Natural killer cell (primary cell): ENCODE measurements at regions of chr14 and their contacts with region 1.

Region 1: GRCh38 chr14:63543000-63543825 is at the start of gene PPP2R5E:
- DNase-seq: peak; percentile 97 to 99
- ATAC-seq: peak; percentile 95 to 99 (median 95)
- H3K4me3 ChIP-seq: peak within 1 kb of the TSS; percentile 92
- H3K4me3 Mint-ChIP-seq: peak within 1 kb of the TSS; percentile 99
- H3K27ac ChIP-seq: peak within 1 kb of the TSS; percentile 86
- H3K27ac Mint-ChIP-seq: peak within 1 kb of the TSS; percentile 92
- H3K4me1 ChIP-seq: peaks cover 12% of the 10 kb centered on the region
- H3K4me1 Mint-ChIP-seq: peaks cover 28 to 34% of the 10 kb centered on the region in 2 donors
- H3K27me3 ChIP-seq: no peaks in the 10 kb centered on the region
- H3K27me3 Mint-ChIP-seq: no peaks in the 10 kb centered on the region
- CTCF ChIP-seq: no peak
- total RNA-seq, gene PPP2R5E: 57.4 to 64.1 (median 62.4) TPM

Region 2: DNA sequence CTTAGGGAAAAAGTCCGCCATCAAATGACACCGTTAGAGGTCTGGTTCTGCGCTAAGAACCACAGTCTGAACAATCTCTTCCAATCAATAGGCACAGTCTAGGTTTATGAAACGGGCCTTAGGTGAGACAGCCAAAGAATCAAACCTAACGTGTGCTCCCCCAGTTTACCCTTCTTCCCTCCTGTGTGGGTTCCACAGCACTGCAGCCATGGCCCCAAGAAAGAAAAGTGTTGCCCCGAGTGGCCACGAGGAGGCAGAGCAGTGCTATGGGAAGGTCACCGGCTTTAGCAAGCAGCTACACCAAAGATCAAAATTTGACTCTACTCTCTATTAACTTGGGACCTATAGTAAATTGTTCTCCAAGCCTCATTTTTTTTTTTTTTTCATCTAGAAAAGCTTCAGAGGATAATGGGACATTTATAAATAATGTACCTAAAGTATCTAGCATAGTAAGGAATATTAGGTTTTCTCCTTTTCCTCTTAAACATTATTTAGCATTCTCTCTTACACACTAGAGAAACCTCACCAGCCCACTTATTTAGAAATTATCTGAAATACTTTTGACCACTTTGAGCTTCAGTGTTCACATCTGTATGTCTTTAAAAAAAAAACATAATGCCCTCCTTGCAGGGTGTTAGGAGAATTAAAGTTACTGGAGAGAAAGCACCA is 154.3 kb before region 1 on chr14:
- intact Hi-C with region 1: loop called (anchors 1 kb)
- DNase-seq: peak; percentile 57 to 66
- ATAC-seq: peak; percentile 79 to 88 (median 83)
- H3K4me3 ChIP-seq: no peak overlapping the region
- H3K4me3 Mint-ChIP-seq: no peak overlapping the region
- H3K27ac ChIP-seq: no peak overlapping the region
- H3K27ac Mint-ChIP-seq: peak overlapping the region; percentile 44 to 67
- H3K4me1 ChIP-seq: peaks cover 8% of the 10 kb centered on the region
- H3K4me1 Mint-ChIP-seq: peaks cover 26 to 29% of the 10 kb centered on the region in 2 donors
- H3K27me3 ChIP-seq: no peaks in the 10 kb centered on the region
- H3K27me3 Mint-ChIP-seq: no peaks in the 10 kb centered on the region
- CTCF ChIP-seq: peak; percentile 78

Region 3: DNA sequence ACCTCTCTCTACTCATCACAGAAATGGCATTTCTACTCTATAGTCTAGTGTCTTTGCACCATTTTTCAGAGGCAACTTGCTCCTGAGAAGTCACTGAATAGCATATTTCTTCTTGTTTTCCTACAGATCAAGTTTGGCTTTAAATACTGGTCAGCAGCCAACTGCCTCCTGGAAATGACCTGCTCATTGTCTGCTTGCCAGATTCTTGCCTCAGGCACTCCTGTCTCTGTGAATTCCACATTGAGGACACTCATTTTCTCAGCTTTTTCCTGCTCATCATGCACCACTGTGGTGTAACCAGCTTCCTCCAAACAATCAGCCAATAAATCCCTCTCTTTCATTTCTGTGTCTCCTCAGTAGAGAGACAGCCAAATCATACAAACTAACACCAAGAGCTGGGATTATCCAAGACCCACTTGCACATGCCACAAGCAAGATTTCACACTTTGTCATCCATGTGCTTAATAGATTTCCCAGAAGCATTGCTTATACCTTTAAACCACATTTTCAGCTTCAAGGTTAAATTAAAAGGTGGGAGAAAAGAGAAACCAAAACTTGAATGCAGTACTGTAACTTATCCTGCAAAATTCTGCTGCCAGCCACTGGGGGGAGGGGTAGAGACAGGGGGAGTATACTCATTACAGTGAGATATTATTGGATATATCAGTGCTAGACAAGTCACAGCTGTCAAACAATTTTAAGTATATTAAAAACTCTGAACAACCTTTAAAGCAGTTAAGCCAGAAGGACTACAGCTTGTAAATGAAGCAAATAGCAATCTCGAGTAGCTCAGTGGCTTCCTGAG is 105.1 kb before region 1 on chr14:
- intact Hi-C with region 1: loop called (anchors 2 kb)
- DNase-seq: peak in 1 of 2 donors; percentile 37
- ATAC-seq: peak; percentile 71 to 84 (median 77)
- H3K4me3 ChIP-seq: no peak overlapping the region
- H3K4me3 Mint-ChIP-seq: peak overlapping the region; percentile 67
- H3K27ac ChIP-seq: no peak overlapping the region
- H3K27ac Mint-ChIP-seq: peak overlapping the region; percentile 73 to 79
- H3K4me1 ChIP-seq: peaks cover 11% of the 10 kb centered on the region
- H3K4me1 Mint-ChIP-seq: peaks cover 61 to 62% of the 10 kb centered on the region in 2 donors
- H3K27me3 ChIP-seq: no peaks in the 10 kb centered on the region
- H3K27me3 Mint-ChIP-seq: no peaks in the 10 kb centered on the region
- CTCF ChIP-seq: peak; percentile 26

Region 4: GRCh38 chr14:63478010-63478409 is 65.2 kb before region 1 on chr14:
- intact Hi-C with region 1: loop called (anchors 1 kb)
- DNase-seq: peak in 1 of 2 donors; percentile 64
- ATAC-seq: peak; percentile 86 to 92 (median 92)
- H3K4me3 ChIP-seq: no peak overlapping the region
- H3K4me3 Mint-ChIP-seq: peak overlapping the region; percentile 43
- H3K27ac ChIP-seq: peak overlapping the region; percentile 74
- H3K27ac Mint-ChIP-seq: peak overlapping the region; percentile 82 to 88
- H3K4me1 ChIP-seq: peaks cover 9% of the 10 kb centered on the region
- H3K4me1 Mint-ChIP-seq: peaks cover 21 to 43% of the 10 kb centered on the region in 2 donors
- H3K27me3 ChIP-seq: no peaks in the 10 kb centered on the region
- H3K27me3 Mint-ChIP-seq: no peaks in the 10 kb centered on the region
- CTCF ChIP-seq: no peak

Region 5: DNA sequence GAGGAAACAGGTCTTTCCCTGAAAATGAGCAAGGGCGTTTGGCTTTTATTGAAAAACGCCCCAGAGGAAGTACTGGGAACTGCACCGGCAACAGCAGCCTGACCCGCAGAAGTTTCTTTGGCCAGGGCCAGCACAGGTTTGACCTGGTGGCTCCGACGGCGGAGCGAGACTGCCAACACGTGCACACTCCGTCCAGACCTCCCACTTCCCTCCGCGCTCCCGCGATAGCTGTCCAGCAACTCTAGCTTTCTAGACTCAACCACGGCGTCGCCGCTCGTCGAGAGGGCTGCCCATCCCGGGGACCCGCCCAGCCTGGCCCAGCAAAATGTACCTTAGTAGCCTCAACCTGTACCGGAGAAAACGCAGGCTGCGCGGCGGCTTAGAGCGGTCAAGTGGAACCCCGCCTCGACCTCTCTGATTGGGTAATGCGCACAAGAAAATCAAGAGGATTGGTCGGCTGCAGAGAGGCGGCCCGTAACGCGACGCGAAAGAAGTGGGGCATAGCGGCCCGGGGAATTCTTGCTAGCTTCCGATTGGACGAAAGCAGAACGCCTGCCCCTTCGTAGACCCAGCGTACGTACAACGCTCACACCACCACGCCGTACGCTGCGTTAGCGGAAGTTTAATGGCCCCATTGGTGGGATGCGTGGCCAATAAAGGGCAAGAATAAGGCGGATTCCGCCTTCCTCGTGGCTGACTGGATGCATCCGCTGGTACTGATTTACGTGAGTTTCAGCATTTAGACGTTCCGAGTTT is 98.4 kb after region 1 on chr14 and contains the start of gene WDR89:
- intact Hi-C with region 1: loop called (anchors 2 kb)
- DNase-seq: peak; percentile 92 to 99
- ATAC-seq: peak; percentile 79 to 92 (median 81)
- H3K4me3 ChIP-seq: peak within 1 kb of the TSS; percentile 90
- H3K4me3 Mint-ChIP-seq: peak within 1 kb of the TSS; percentile 92
- H3K27ac ChIP-seq: peak within 1 kb of the TSS; percentile 99
- H3K27ac Mint-ChIP-seq: peak within 1 kb of the TSS; percentile 95 to 96
- H3K4me1 ChIP-seq: peaks cover 11% of the 10 kb centered on the region
- H3K4me1 Mint-ChIP-seq: peaks cover 22 to 28% of the 10 kb centered on the region in 2 donors
- H3K27me3 ChIP-seq: no peaks in the 10 kb centered on the region
- H3K27me3 Mint-ChIP-seq: no peaks in the 10 kb centered on the region
- CTCF ChIP-seq: peak; percentile 70
- total RNA-seq, gene WDR89: 9.6 to 13.4 (median 10.7) TPM